Calu3 (cell line): ENCODE measurements at regions of chr5 and their contacts with region 1.

Region 1: GRCh38 chr5:36241631-36242533 is at the start of gene NADK2:
- DNase-seq: peak; percentile 95
- H3K4me3 Mint-ChIP-seq: peak within 1 kb of the TSS; percentile 97
- H3K27ac Mint-ChIP-seq: peak within 1 kb of the TSS; percentile 97
- H3K4me1 Mint-ChIP-seq: peaks cover 41% of the 10 kb centered on the region
- H3K27me3 Mint-ChIP-seq: no peaks in the 10 kb centered on the region
- CTCF ChIP-seq: peak; percentile 53
- total RNA-seq, gene NADK2: 18.8 and 21.6 TPM in 2 replicates

Region 2: GRCh38 chr5:36193746-36194145 is 48.1 kb before region 1 on chr5:
- CTCF ChIA-PET with region 1: no interaction called
- intact Hi-C with region 1: no loop called
- DNase-seq: no peak
- H3K4me3 Mint-ChIP-seq: no peak overlapping the region
- H3K27ac Mint-ChIP-seq: no peak overlapping the region
- H3K4me1 Mint-ChIP-seq: peaks cover 6% of the 10 kb centered on the region
- H3K27me3 Mint-ChIP-seq: no peaks in the 10 kb centered on the region
- CTCF ChIP-seq: no peak

Region 3: DNA sequence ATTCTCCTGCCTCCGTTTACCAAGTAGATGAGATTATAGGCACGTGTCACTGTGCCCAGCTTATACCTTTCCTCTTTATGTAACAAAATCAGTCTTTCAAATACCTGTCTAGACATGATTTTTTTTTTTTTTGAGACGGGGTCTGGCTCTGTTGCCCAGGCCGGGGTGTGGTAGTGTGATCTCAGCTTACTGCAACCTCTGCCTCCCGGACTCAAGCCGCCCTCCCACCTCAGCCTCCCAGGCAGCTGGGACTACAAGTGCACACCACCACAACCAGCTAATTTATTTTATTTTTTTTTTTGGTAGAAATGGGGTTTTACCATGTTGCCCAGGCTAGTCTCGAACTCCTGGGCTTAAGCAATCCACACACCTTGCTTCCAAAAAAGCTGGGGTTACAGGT is 13.4 kb before region 1 on chr5:
- CTCF ChIA-PET with region 1: interaction called, 10 read pairs
- intact Hi-C with region 1: no loop called
- DNase-seq: no peak
- H3K4me3 Mint-ChIP-seq: no peak overlapping the region
- H3K27ac Mint-ChIP-seq: no peak overlapping the region
- H3K4me1 Mint-ChIP-seq: peaks cover 27% of the 10 kb centered on the region
- H3K27me3 Mint-ChIP-seq: no peaks in the 10 kb centered on the region
- CTCF ChIP-seq: no peak